HEK293T (cell line): ENCODE measurements at regions of chr11 and their contacts with region 1.

Region 1: DNA sequence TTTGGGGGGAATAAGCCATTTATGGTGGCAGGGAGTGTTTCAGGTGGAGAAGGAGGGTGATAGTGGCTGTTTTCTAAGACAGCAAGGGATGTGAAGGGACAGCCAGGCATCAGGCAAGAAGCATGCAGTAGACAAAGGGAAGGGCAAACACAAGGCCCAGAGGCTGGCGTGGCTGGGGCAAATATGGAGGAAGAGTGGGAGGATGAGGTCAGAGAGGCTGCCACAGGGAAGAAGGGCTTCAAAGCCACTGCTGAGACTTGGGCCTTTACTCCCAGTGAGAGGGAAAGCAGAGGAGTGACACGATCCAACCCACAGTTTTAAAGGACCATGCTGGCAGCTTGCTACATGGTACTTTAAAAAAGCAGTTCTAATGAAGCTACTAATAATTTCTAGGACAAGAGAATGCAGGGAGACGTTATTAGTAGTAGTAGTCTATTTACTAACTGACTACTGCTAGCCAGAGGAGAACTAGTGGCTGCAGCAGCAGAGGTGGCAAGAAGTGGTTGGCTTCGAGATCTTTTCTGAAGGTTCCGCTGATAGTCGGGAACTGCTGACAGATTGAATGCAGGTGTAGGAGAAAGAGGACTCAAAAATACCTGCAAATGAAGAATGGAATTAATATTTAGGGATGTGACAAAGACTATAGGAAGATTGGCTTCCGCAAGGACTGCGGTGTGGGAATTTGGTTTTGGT is 13.7 kb downstream of the KMT5B start:
- DNase-seq: no peak

Region 2: GRCh38 chr11:68213555-68214174 is 14.2 kb after region 1 on chr11:
- CTCF ChIA-PET with region 1: interaction called, 13 read pairs
- POLR2A ChIA-PET with region 1: no interaction called
- DNase-seq: peak; percentile 74

Region 3: GRCh38 chr11:68297812-68298658 is 98.6 kb after region 1 on chr11:
- CTCF ChIA-PET with region 1: no interaction called
- POLR2A ChIA-PET with region 1: no interaction called
- DNase-seq: peak; percentile 91